CD8-positive, alpha-beta T cell (primary cell): ENCODE measurements at regions of chr20 and their contacts with region 1.

Region 1: DNA sequence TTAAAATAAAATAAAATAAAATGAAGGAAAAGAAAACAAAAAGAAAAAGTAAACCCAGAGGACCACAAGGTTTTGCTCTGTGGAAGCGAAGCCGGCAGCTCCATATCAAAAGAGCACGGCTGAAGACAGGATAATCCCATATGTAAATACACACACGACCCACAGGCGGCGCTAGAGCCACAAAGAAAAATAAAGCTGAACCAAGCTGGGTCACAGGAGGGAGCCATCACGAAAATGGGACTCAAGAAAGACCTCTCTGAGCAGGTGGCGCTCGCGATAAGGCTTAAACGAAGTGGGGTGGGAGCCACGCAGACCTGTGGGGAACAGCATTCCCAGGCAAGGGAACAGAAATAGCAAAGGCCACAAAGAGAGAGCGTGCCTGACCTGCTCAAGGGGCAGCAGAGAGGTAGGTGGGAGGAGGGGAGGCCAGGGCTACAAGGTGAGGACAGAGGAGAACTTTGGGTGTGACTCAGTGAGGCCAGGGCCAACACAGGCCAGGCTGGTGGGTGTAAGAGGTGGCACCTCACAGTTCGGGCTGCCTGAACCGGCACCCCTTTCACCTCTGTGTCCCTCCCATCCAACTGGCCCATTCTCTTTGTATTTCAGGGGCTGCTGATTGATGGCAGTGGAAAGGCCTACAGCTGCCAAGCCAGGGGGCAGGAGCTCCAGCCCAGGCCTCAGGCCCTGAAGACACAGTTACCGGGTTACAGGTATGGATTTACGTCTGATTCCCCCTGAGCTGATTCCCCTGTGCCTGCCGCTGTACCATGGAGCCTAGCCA is 26.0 kb downstream of the PTGIS start:
- DNase-seq: peak; percentile 23 to 78 (median 47)
- ATAC-seq: peak; percentile 65
- H3K4me3 ChIP-seq: no peak overlapping the region
- H3K4me3 Mint-ChIP-seq: no peak overlapping the region
- H3K27ac ChIP-seq: no peak overlapping the region
- H3K27ac Mint-ChIP-seq: no peak overlapping the region
- H3K4me1 ChIP-seq: no peaks in the 10 kb centered on the region
- H3K4me1 Mint-ChIP-seq: peaks cover 3% of the 10 kb centered on the region
- H3K27me3 ChIP-seq: peaks cover 0 to under 1% of the 10 kb centered on the region in 2 experiments
- H3K27me3 Mint-ChIP-seq: peaks cover 14% of the 10 kb centered on the region
- CTCF ChIP-seq: peak; percentile 53

Region 2: GRCh38 chr20:49846206-49846807 is 304.4 kb after region 1 on chr20:
- CTCF ChIA-PET with region 1: interaction called, 21 read pairs
- POLR2A ChIA-PET with region 1: no interaction called
- intact Hi-C with region 1: loop called in 1 of 2 experiments (anchors 2 kb)
- DNase-seq: peak in 7 of 9 experiments; percentile 33 to 76 (median 55)
- ATAC-seq: peak; percentile 73
- H3K4me3 ChIP-seq: no peak overlapping the region
- H3K4me3 Mint-ChIP-seq: no peak overlapping the region
- H3K27ac ChIP-seq: no peak overlapping the region
- H3K27ac Mint-ChIP-seq: no peak overlapping the region
- H3K4me1 ChIP-seq: no peaks in the 10 kb centered on the region
- H3K4me1 Mint-ChIP-seq: peaks cover 9% of the 10 kb centered on the region
- H3K27me3 ChIP-seq: no peaks in the 10 kb centered on the region
- H3K27me3 Mint-ChIP-seq: no peaks in the 10 kb centered on the region
- CTCF ChIP-seq: peak; percentile 81

Region 3: DNA sequence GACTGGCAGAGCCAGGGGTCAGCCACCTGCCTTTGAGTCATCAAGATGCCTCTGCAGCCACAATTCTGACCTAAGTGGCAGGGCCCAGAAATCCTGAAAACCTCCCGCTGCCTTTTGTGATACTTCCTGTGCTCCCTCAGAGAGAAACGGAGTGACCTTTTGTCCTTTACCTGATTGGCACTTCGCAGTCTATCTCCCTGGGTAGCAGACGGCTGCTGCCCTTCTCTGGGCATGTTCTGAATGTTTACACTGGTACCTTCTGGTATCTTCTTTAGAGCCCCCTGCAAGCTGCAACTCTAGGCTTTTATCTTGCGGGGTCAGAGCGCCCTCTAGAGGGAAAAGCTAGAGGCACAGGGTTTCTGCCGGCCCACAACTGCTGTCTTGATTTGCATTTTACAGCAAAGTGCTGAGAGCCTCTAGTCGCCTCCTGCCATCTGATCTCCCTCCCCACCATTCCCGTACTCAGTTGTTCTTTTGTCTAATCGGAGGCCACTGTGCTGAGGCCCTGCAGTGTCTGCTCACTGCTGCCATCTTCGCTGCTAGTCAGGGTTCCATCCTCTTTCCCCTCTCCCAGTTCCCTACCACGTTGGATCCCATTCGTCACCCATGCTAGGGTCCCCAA is 346.5 kb after region 1 on chr20:
- CTCF ChIA-PET with region 1: interaction called, 3 read pairs
- POLR2A ChIA-PET with region 1: no interaction called
- intact Hi-C with region 1: loop called in 1 of 2 experiments (anchors 1 kb)
- DNase-seq: peak; percentile 31 to 68 (median 58)
- ATAC-seq: peak; percentile 64
- H3K4me3 ChIP-seq: no peak overlapping the region
- H3K4me3 Mint-ChIP-seq: no peak overlapping the region
- H3K27ac ChIP-seq: no peak overlapping the region
- H3K27ac Mint-ChIP-seq: no peak overlapping the region
- H3K4me1 ChIP-seq: no peaks in the 10 kb centered on the region
- H3K4me1 Mint-ChIP-seq: peaks cover 2% of the 10 kb centered on the region
- H3K27me3 ChIP-seq: no peaks in the 10 kb centered on the region
- H3K27me3 Mint-ChIP-seq: no peaks in the 10 kb centered on the region
- CTCF ChIP-seq: peak; percentile 66

Region 4: DNA sequence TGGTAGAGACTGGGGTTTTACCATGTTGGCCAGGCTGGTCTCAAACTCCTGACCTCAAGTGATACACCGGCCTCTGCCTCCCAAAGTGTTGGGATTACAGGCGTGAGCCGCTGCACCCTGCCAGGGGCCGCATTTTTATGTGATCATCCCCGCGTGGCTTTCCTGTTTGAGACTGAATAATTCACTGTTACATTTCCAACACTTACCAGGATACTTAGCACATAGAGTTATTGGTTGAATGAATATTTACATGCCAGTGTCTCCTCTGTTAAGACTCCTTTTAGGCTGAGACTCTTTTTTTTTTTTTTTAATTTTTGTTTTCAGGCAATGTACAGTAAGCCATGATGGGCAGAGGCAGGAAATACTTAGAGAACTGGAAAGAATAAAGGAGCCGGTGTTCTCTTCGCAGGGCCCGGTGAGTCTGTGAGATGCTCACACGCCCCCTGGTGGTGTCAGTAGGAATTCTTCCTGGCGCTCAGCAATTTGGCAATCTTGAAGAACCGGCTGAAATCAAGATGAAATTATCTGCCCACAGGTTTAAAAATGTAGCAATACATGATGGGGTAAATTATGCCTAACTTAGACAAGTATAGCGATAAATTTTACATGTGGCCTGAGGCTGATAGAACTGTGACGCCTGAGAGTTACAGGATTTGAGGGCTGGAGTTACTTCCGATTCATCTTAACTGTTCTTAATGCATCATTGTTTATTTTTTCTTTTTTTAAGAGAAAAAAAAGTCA is 386.6 kb after region 1 on chr20:
- CTCF ChIA-PET with region 1: no interaction called
- POLR2A ChIA-PET with region 1: no interaction called
- intact Hi-C with region 1: loop called in 1 of 2 experiments (anchors 2 kb)
- DNase-seq: peak; percentile 57 to 88 (median 82)
- ATAC-seq: peak; percentile 99
- H3K4me3 ChIP-seq: no peak overlapping the region
- H3K4me3 Mint-ChIP-seq: peak overlapping the region; percentile 27
- H3K27ac ChIP-seq: no peak overlapping the region
- H3K27ac Mint-ChIP-seq: peak overlapping the region; percentile 46
- H3K4me1 ChIP-seq: peaks cover 6% of the 10 kb centered on the region
- H3K4me1 Mint-ChIP-seq: peaks cover 8% of the 10 kb centered on the region
- H3K27me3 ChIP-seq: no peaks in the 10 kb centered on the region
- H3K27me3 Mint-ChIP-seq: peaks cover 2% of the 10 kb centered on the region
- CTCF ChIP-seq: peak; percentile 95